ENCODE measurements at regions of chr1 and their contacts with region 1.

Region 1: DNA sequence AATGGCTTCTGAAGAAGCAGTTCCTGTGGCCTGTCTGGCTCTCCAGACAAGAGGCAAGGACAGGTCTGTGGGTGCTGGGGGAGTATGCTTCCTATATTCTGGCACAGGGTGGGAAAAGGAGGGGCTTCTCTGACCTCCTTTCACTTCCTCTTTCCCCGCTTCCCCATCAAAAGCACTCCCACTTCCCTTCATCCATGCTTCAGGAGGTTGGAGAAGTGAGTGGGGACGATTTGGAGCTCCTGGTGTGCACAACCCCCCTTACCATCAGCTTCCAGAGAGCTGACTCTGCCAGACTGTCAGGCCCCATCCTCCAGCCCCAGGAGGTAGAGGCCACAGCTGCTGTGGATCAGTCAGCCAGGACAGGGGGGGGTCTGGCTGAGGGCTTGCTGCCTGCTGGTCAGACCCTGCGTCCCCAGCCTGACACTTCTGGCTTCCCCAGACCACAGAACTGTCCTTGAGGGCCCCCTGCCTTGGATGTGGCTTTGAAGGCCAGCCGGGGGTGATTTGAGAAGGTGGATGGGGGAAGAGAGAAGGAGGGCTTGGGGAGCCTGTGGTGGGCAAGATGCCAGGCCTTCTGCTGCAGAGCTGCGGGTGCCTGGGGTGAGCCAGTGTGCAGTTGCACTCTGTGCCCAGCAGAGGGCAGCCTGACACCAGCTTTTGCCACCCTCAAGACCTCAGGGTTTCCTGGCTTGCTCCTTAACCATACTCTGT is 21.5 kb upstream of the TMEM222 start:
- DNase-seq: peak; percentile 91
- ATAC-seq: peak; percentile 86

Region 2: DNA sequence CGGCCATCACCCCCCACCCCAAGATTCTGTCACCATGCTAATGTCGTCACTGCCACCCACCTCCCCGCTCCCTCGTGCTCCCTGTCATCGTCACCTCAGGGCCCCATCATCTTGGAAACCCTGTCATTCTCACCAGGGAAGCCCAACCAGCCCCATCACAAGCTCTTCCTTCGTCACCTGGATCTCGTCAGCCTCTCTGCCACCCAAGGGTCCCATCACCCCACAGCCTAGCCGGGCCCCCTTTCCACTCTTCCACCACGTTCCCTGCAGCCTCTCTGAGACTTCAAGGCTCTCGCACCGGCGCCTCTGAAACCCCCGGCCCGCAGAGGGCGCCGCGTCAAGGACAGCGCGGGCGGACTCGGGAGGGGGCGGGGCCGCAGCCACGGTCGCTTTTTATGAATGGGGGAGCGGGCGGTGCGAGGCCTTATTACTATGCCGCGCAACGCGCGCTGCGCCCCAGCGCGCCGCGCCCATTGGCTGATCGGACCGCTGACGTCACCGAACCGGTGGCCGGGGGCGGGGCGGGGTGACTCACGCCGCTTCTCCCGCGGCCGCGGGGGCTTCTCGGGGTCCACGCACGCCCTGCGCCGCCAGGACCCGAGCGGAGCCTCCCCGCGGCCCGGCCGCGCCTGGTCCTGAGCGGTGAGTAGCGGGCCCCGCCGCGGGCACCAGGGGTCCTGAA is 91.7 kb after region 1 on chr1 and contains the start of gene GPR3:
- intact Hi-C with region 1: loop called (anchors 2 kb)
- DNase-seq: peak; percentile 96
- ATAC-seq: peak; percentile 92
- total RNA-seq, gene GPR3: 0.24 TPM

Region 3: GRCh38 chr1:27416387-27417111 is 116.1 kb after region 1 on chr1:
- intact Hi-C with region 1: no loop called
- DNase-seq: no peak
- ATAC-seq: peak; percentile 16

Region 4: DNA sequence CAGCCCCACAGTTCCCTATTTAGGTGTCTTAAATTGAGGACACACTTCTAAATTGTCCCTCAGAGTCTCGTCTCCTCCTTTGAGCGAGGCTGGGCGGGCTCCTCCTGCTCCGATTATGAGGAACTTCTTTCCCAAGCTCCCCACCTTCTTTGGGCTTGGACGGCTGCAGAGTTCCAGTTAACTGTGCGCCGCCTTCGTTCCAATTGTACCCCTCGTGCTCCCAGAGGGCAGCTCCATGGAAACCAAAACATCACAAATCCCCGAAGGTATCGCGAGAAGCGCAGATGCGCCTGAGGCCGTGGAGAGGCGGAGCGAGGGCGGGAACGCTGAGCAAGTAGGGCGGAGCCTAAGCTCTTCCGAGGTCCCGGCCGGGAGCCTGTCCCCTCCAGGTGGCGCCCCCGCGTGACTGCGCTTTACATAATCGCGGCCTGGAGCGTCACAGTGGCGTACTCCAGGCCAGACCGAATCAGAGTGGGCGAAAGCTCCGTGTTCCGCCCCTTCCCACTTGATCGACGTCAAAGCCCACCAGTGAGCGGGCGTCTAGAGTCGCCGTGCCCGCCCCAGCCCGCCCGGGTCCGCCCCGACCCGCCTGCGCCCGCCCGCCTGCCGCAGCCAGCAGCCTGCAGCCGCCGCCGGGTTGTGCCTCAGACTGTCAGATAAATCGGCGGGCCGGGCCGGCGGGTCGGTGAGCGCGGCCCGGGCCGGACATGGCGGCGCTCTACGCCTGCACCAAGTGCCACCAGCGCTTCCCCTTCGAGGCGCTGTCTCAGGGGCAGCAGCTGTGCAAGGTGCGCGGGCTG is 425.1 kb after region 1 on chr1 and contains the start of gene FAM76A:
- intact Hi-C with region 1: no loop called
- DNase-seq: peak; percentile 100
- ATAC-seq: peak; percentile 98
- total RNA-seq, gene FAM76A: 9.8 TPM